ENCODE measurements at regions of chr15 and their contacts with region 1.

Region 1: GRCh38 chr15:40367686-40368611 is 9.9 kb downstream of the DISP2 start:
- DNase-seq: peak; percentile 74 to 97 (median 83)
- ATAC-seq: peak; percentile 98
- H3K4me3 ChIP-seq: peak overlapping the region; percentile 69
- H3K4me3 Mint-ChIP-seq: peak overlapping the region; percentile 81
- H3K27ac ChIP-seq: peak overlapping the region in 1 of 2 donors; percentile 1
- H3K27ac Mint-ChIP-seq: peak overlapping the region; percentile 64
- H3K4me1 ChIP-seq: peaks cover 33% of the 10 kb centered on the region
- H3K4me1 Mint-ChIP-seq: peaks cover 17% of the 10 kb centered on the region
- H3K27me3 ChIP-seq: no peaks in the 10 kb centered on the region
- H3K27me3 Mint-ChIP-seq: no peaks in the 10 kb centered on the region
- CTCF ChIP-seq: peak; percentile 88

Region 2: DNA sequence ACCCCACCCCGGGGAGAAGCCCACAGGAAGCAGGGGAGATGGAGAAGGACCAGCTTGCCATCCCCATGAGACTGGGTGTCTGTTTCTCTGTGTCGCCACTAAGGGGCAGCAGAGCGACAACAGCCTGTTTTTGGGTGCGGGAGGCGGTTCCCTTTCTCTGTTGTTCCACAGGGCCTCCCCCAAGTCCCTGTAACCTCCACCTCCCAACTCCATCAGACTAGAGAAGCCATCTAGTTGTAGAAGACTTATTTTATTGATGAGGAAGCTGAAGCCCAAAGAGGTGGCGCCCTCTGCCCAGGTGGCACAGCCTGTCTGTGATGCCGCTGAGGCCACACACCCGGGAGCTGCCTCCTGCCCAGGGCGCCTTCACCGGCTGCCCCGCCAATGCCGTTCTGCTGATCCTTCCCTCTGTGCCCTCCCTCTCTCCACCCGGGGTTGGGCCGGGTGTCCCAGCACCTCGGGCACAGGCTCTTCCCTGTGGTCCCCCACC is 23.3 kb before region 1 on chr15:
- CTCF ChIA-PET with region 1: interaction called, 23 read pairs
- POLR2A ChIA-PET with region 1: interaction called, 3 read pairs
- intact Hi-C with region 1: loop called in 1 of 2 experiments (anchors 2 kb)
- DNase-seq: peak; percentile 46 to 83 (median 62)
- ATAC-seq: peak; percentile 97
- H3K4me3 ChIP-seq: no peak overlapping the region
- H3K4me3 Mint-ChIP-seq: no peak overlapping the region
- H3K27ac ChIP-seq: no peak overlapping the region
- H3K27ac Mint-ChIP-seq: no peak overlapping the region
- H3K4me1 ChIP-seq: peaks cover 11% of the 10 kb centered on the region
- H3K4me1 Mint-ChIP-seq: no peaks in the 10 kb centered on the region
- H3K27me3 ChIP-seq: no peaks in the 10 kb centered on the region
- H3K27me3 Mint-ChIP-seq: no peaks in the 10 kb centered on the region
- CTCF ChIP-seq: peak; percentile 81

Region 3: GRCh38 chr15:40357723-40358470 is 10.1 kb before region 1 on chr15 and contains the start of gene DISP2:
- CTCF ChIA-PET with region 1: interaction called, 3 read pairs
- POLR2A ChIA-PET with region 1: interaction called, 3 read pairs
- intact Hi-C with region 1: loop called in 1 of 2 experiments (anchors 1 kb)
- DNase-seq: peak; percentile 77 to 96 (median 89)
- ATAC-seq: peak; percentile 91
- H3K4me3 ChIP-seq: peak within 1 kb of the TSS; percentile 67
- H3K4me3 Mint-ChIP-seq: peak within 1 kb of the TSS; percentile 80
- H3K27ac ChIP-seq: no peak within 1 kb of the TSS
- H3K27ac Mint-ChIP-seq: no peak within 1 kb of the TSS
- H3K4me1 ChIP-seq: peaks cover 17% of the 10 kb centered on the region
- H3K4me1 Mint-ChIP-seq: peaks cover 14% of the 10 kb centered on the region
- H3K27me3 ChIP-seq: no peaks in the 10 kb centered on the region
- H3K27me3 Mint-ChIP-seq: no peaks in the 10 kb centered on the region
- CTCF ChIP-seq: no peak
- total RNA-seq, gene DISP2: 0.03 to 0.06 TPM

Region 4: DNA sequence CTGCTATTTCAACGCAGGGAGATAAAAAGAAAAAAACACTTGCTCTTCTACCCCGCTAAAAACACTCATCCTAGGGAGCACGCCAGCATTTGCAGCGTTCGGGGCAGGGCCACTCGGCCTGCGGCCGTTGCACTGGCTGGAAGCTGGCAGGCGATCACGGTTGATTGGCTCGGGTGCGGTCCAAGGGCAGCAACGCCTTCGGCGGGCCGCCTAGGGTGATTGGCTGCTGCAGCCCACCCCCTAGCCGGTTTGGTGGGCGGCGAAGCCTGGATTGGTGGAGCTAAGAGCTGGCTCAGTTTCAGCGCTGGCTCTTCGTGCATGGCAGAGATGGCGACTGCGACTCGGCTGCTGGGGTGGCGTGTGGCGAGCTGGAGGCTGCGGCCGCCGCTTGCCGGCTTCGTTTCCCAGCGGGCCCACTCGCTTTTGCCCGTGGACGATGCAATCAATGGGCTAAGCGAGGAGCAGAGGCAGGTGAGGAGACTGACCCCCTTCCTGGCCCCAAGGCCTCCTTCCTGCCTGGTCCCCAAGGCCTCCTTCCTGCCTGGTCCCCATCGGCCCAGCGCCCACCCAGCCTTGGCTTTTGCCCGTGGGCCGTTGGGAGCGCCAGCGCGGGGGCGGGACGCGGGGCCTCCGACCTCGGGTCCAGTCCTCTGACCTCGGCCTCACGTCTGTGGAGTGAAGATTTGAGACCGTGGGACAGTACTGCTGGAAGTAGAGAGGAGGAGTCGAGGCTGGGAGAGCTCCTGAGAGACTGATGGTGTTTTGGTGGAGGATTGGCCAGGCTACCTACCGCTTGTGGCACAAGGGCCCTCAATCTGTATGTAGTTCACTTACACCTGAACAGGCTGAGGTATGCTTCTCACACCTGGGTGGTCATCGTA is 37.8 kb after region 1 on chr15 and contains the start of gene IVD:
- CTCF ChIA-PET with region 1: no interaction called
- POLR2A ChIA-PET with region 1: interaction called, 13 read pairs
- intact Hi-C with region 1: no loop called
- DNase-seq: peak; percentile 67 to 92 (median 82)
- ATAC-seq: peak; percentile 96
- H3K4me3 ChIP-seq: peak within 1 kb of the TSS; percentile 76
- H3K4me3 Mint-ChIP-seq: peak within 1 kb of the TSS; percentile 92
- H3K27ac ChIP-seq: peak within 1 kb of the TSS; percentile 35 to 60
- H3K27ac Mint-ChIP-seq: peak within 1 kb of the TSS; percentile 69
- H3K4me1 ChIP-seq: peaks cover 22% of the 10 kb centered on the region
- H3K4me1 Mint-ChIP-seq: peaks cover 39% of the 10 kb centered on the region
- H3K27me3 ChIP-seq: no peaks in the 10 kb centered on the region
- H3K27me3 Mint-ChIP-seq: no peaks in the 10 kb centered on the region
- CTCF ChIP-seq: no peak
- total RNA-seq, gene IVD: 30.7 to 31.9 TPM

Region 5: DNA sequence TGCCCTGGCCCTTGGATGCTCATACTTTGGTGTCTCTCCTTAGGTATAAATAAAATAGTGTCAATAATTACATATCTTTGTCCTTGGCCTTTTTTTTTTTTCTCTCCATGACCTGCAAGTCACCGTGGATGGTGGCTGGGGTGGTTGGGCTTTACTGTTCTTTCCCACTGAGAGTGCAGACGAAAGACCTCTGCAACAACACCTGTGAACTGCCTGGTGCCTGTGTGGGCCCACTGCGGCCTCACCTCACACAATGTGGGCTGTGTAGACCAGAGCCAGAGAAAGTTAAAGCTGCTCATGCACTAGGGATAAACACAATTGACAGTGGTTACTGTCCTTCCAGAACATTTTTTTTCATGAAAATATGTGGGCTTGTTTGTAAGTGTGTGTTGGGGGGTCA is 157.9 kb after region 1 on chr15:
- CTCF ChIA-PET with region 1: no interaction called
- POLR2A ChIA-PET with region 1: no interaction called
- intact Hi-C with region 1: no loop called
- DNase-seq: no peak
- ATAC-seq: no peak
- H3K4me3 ChIP-seq: no peak overlapping the region
- H3K4me3 Mint-ChIP-seq: no peak overlapping the region
- H3K27ac ChIP-seq: no peak overlapping the region
- H3K27ac Mint-ChIP-seq: no peak overlapping the region
- H3K4me1 ChIP-seq: no peaks in the 10 kb centered on the region
- H3K4me1 Mint-ChIP-seq: no peaks in the 10 kb centered on the region
- H3K27me3 ChIP-seq: no peaks in the 10 kb centered on the region
- H3K27me3 Mint-ChIP-seq: no peaks in the 10 kb centered on the region
- CTCF ChIP-seq: no peak

Measured in CD4-positive, alpha-beta T cell (primary cell).